ENCODE measurements at regions of chr20 and their contacts with region 1.

Region 1: GRCh38 chr20:15220778-15221565 is 883.6 kb upstream of the FLRT3 start:
- DNase-seq: no peak
- ATAC-seq: no peak
- H3K4me3 ChIP-seq: no peak overlapping the region
- H3K27ac ChIP-seq: no peak overlapping the region
- H3K4me1 ChIP-seq: no peaks in the 10 kb centered on the region
- H3K27me3 ChIP-seq: no peaks in the 10 kb centered on the region; a peak in 1 of 4 replicates
- CTCF ChIP-seq: no peak
- EP300 ChIP-seq: no peak
- POLR2A ChIP-seq: no peak
- RAD21 ChIP-seq: no peak

Region 2: DNA sequence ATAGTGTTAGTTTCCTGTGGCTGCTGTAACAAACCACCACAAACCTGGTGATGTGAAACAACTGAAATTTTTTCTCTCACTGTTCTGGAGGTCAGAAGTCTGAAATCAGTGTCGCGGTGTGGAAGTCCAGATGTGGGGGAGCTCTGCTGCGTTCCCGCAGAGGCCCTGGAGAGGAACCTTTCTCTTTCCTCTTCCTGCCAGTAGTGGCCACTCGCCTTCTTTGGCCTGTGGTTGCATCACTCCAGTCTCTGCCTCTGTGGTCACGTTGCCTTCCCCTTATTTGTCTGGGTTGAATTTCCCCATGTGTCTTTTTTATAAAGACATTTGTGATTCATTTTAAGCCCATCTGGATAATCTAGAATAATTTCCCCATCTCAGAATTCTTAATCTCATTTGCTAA is 588.1 kb before region 1 on chr20:
- CTCF ChIA-PET with region 1: no interaction called
- POLR2A ChIA-PET with region 1: no interaction called
- RAD21 ChIA-PET with region 1: no interaction called
- SMC1A ChIA-PET with region 1: no interaction called
- in situ Hi-C with region 1: no loop called
- intact Hi-C with region 1: loop called (anchors 10 kb)
- DNase-seq: no peak
- ATAC-seq: peak; percentile 66
- H3K4me3 ChIP-seq: no peak overlapping the region
- H3K27ac ChIP-seq: no peak overlapping the region
- H3K4me1 ChIP-seq: no peaks in the 10 kb centered on the region; the same call in 1 of the 2 replicates
- H3K27me3 ChIP-seq: no peaks in the 10 kb centered on the region; a peak in 1 of 4 replicates
- CTCF ChIP-seq: 0 out of 6 replicates have a peak, but pooled peaks of 2 of the 3 experiments have one; percentile 8 to 13
- EP300 ChIP-seq: no peak
- POLR2A ChIP-seq: no peak
- RAD21 ChIP-seq: no peak

Region 3: DNA sequence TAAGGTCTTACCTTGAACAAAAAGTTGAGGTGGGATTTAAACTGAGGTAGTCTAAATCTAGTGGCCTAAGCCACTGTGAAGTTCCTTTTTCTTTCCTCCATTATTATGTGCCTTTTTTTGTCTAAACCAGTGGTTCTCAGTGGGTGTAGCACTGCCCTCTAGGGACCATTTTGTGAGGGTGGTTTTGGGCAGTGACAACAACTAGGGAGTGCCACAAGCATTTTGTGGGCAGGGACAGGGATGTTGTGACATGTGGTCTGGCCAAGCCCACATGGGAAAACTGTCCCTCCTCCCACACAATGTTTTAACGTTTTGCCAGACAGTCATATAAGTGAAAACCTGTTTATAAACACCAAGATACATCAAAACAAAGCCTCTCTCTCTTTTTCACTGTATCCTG is 15.8 kb after region 1 on chr20:
- CTCF ChIA-PET with region 1: interaction called, 11 read pairs
- POLR2A ChIA-PET with region 1: no interaction called
- RAD21 ChIA-PET with region 1: no interaction called
- SMC1A ChIA-PET with region 1: no interaction called
- in situ Hi-C with region 1: no loop called
- intact Hi-C with region 1: no loop called
- DNase-seq: peak; percentile 38
- ATAC-seq: peak; percentile 96
- H3K4me3 ChIP-seq: no peak overlapping the region
- H3K27ac ChIP-seq: no peak overlapping the region
- H3K4me1 ChIP-seq: no peaks in the 10 kb centered on the region
- H3K27me3 ChIP-seq: no peaks in the 10 kb centered on the region
- CTCF ChIP-seq: peak; percentile 56 to 66 (median 61)
- EP300 ChIP-seq: no peak
- POLR2A ChIP-seq: no peak
- RAD21 ChIP-seq: peak; percentile 87

Measured in GM12878 (cell line).